Panc1 (cell line): ENCODE measurements at regions of chr12 and their contacts with region 1.

Region 1: GRCh38 chr12:117018685-117019084 is 80.5 kb downstream of the TESC start:
- DNase-seq: no peak
- ATAC-seq: no peak
- H3K4me3 ChIP-seq: no peak overlapping the region
- H3K27ac ChIP-seq: no peak overlapping the region
- H3K4me1 ChIP-seq: no peaks in the 10 kb centered on the region
- H3K27me3 ChIP-seq: no peaks in the 10 kb centered on the region
- CTCF ChIP-seq: no peak

Region 2: GRCh38 chr12:117060246-117060928 is 41.7 kb after region 1 on chr12:
- CTCF ChIA-PET with region 1: no interaction called
- POLR2A ChIA-PET with region 1: no interaction called
- in situ Hi-C with region 1: no loop called
- intact Hi-C with region 1: no loop called
- DNase-seq: no peak
- ATAC-seq: peak; percentile 50
- H3K4me3 ChIP-seq: no peak overlapping the region
- H3K27ac ChIP-seq: no peak overlapping the region
- H3K4me1 ChIP-seq: no peaks in the 10 kb centered on the region
- H3K27me3 ChIP-seq: no peaks in the 10 kb centered on the region
- CTCF ChIP-seq: no peak

Region 3: DNA sequence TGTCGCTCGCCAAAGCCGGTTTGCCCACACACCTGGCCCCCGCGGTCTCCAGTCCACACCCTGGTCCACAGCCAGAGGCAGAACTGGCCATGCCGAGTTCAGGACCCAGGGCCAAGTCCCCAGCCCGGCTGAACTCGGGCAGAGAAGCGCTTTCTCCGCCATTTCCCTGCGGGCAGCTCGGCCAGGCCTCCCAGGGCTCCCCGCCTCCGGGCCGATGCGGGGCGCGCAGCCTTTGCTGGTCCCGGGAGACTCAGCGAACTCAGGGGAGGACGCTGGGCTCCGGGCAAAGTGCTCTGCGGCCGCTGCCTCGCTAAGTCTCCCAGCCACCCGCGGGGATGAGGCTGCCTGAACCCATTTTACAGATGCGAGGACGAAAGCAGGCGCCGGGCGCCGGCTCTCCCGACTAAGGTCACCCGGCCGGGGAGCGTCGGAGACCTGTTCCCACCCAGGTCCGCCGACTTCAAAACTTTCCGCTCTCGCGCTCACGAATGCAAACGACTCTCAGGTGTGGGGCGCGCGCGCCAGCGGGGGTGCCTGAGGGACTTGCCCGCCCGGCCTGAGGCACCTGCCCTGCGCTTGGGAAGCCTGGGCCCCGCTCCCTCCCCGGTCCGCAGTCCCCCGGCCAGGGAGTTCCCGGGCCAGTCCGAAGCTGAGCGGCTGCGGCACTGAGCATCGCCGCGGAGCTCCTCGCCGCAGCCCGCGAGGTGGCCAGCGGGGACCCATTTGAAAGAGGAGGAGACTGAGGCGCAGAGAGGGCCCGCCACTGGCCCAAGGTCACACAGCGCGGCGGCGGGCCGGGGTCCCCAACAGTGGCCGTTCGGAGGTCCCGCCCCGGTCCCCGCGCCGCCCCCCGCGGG is 79.9 kb after region 1 on chr12:
- CTCF ChIA-PET with region 1: no interaction called
- POLR2A ChIA-PET with region 1: no interaction called
- in situ Hi-C with region 1: no loop called
- intact Hi-C with region 1: no loop called
- DNase-seq: no peak
- ATAC-seq: peak; percentile 47
- H3K4me3 ChIP-seq: peak overlapping the region; percentile 43 to 48
- H3K27ac ChIP-seq: no peak overlapping the region
- H3K4me1 ChIP-seq: peaks cover 2% of the 10 kb centered on the region; the same call in 1 of the 2 replicates
- H3K27me3 ChIP-seq: peaks cover 14% of the 10 kb centered on the region
- CTCF ChIP-seq: no peak

Region 4: GRCh38 chr12:117261247-117261646 is 242.6 kb after region 1 on chr12:
- CTCF ChIA-PET with region 1: no interaction called
- POLR2A ChIA-PET with region 1: interaction called, 20 read pairs
- in situ Hi-C with region 1: no loop called
- intact Hi-C with region 1: no loop called
- DNase-seq: peak; percentile 56
- ATAC-seq: 0 out of 2 replicates have a peak, but pooled peaks have one; percentile 53
- H3K4me3 ChIP-seq: no peak overlapping the region
- H3K27ac ChIP-seq: no peak overlapping the region
- H3K4me1 ChIP-seq: no peaks in the 10 kb centered on the region
- H3K27me3 ChIP-seq: no peaks in the 10 kb centered on the region
- CTCF ChIP-seq: no peak